CD14-positive monocyte (primary cell): ENCODE measurements at regions of chr14 and their contacts with region 1.

Region 1: GRCh38 chr14:38721822-38722431 is 381.1 kb downstream of the SEC23A start:
- DNase-seq: peak; percentile 13 to 26 (median 23)
- H3K4me3 ChIP-seq: no peak overlapping the region
- H3K4me3 Mint-ChIP-seq: no peak overlapping the region
- H3K27ac ChIP-seq: no peak overlapping the region
- H3K27ac Mint-ChIP-seq: peak overlapping the region in 1 of 7 donors; percentile 40
- H3K4me1 ChIP-seq: no peaks in the 10 kb centered on the region
- H3K4me1 Mint-ChIP-seq: no peaks in the 10 kb centered on the region
- H3K27me3 ChIP-seq: no peaks in the 10 kb centered on the region
- H3K27me3 Mint-ChIP-seq: no peaks in the 10 kb centered on the region
- CTCF ChIP-seq: peak; percentile 85

Region 2: GRCh38 chr14:38867561-38868150 is 145.7 kb after region 1 on chr14:
- intact Hi-C with region 1: loop called in 1 of 2 experiments (anchors 5 kb)
- DNase-seq: peak; percentile 24 to 60 (median 44)
- H3K4me3 ChIP-seq: no peak overlapping the region
- H3K4me3 Mint-ChIP-seq: no peak overlapping the region
- H3K27ac ChIP-seq: no peak overlapping the region
- H3K27ac Mint-ChIP-seq: peak overlapping the region in 1 of 7 donors; percentile 3
- H3K4me1 ChIP-seq: peaks cover 0 to 4% of the 10 kb centered on the region in 2 donors
- H3K4me1 Mint-ChIP-seq: peaks cover 16% of the 10 kb centered on the region
- H3K27me3 ChIP-seq: no peaks in the 10 kb centered on the region
- H3K27me3 Mint-ChIP-seq: peaks cover 0 to 5% (median 0%) of the 10 kb centered on the region in 3 donors
- CTCF ChIP-seq: peak; percentile 83

Region 3: GRCh38 chr14:38900887-38901286 is 179.0 kb after region 1 on chr14:
- intact Hi-C with region 1: no loop called
- DNase-seq: no peak
- H3K4me3 ChIP-seq: no peak overlapping the region
- H3K4me3 Mint-ChIP-seq: no peak overlapping the region
- H3K27ac ChIP-seq: no peak overlapping the region
- H3K27ac Mint-ChIP-seq: no peak overlapping the region
- H3K4me1 ChIP-seq: no peaks in the 10 kb centered on the region
- H3K4me1 Mint-ChIP-seq: no peaks in the 10 kb centered on the region
- H3K27me3 ChIP-seq: no peaks in the 10 kb centered on the region
- H3K27me3 Mint-ChIP-seq: peaks cover under 1 to 3% (median 3%) of the 10 kb centered on the region in 3 donors
- CTCF ChIP-seq: no peak

Region 4: DNA sequence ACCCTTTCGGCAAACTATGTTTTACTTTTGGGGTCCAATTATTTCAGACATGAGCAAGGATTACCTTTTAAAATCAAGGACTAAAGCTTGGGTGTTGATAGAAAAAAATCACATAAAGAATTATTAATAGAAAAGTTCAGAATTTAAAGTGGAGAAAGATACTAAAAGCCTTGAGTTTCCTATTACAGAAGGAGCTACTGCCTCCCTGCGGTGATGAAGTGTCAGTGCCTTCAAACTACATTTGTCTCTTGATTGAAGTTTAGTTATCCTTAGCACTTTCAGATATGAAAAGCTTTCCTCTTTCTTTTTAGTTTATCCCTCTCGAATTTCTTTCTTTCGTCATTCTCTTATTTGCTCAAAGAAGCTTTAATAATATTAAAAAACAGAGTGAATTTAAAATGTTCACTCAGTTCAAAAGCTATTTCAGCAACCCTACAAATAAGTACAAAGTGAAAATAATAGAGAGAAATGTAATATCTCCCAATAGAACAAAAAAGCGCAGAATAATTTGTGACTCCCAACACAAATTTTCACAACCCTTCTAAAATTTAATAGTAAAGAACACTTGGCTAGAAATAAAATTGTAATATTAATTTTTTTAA is 293.5 kb after region 1 on chr14:
- intact Hi-C with region 1: loop called (anchors 5 to 10 kb)
- DNase-seq: peak in 2 of 3 donors; percentile 29 to 34
- H3K4me3 ChIP-seq: no peak overlapping the region
- H3K4me3 Mint-ChIP-seq: no peak overlapping the region
- H3K27ac ChIP-seq: no peak overlapping the region
- H3K27ac Mint-ChIP-seq: no peak overlapping the region
- H3K4me1 ChIP-seq: no peaks in the 10 kb centered on the region
- H3K4me1 Mint-ChIP-seq: peaks cover 12% of the 10 kb centered on the region
- H3K27me3 ChIP-seq: no peaks in the 10 kb centered on the region
- H3K27me3 Mint-ChIP-seq: peaks cover 0 to 4% (median 0%) of the 10 kb centered on the region in 3 donors
- CTCF ChIP-seq: peak; percentile 89